Naive thymus-derived CD4-positive, alpha-beta T cell (primary cell): ENCODE measurements at regions of chr6 and their contacts with region 1.

Region 1: GRCh38 chr6:142566628-142567396 is 265.0 kb downstream of the ADGRG6 start:
- DNase-seq: peak in 8 of 9 donors; percentile 17 to 69 (median 54)
- ATAC-seq: peak; percentile 81
- H3K4me3 ChIP-seq: no peak overlapping the region
- H3K4me3 Mint-ChIP-seq: peak overlapping the region in 7 of 10 donors; percentile 8 to 78 (median 51)
- H3K27ac ChIP-seq: no peak overlapping the region
- H3K27ac Mint-ChIP-seq: peak overlapping the region in 8 of 9 donors; percentile 51 to 92 (median 76)
- H3K4me1 ChIP-seq: peaks cover 0 to 60% of the 10 kb centered on the region in 2 donors
- H3K4me1 Mint-ChIP-seq: peaks cover 19 to 85% (median 74%) of the 10 kb centered on the region in 7 donors
- H3K27me3 ChIP-seq: no peaks in the 10 kb centered on the region
- H3K27me3 Mint-ChIP-seq: no peaks in the 10 kb centered on the region

Region 2: GRCh38 chr6:141969201-141969600 is 597.6 kb before region 1 on chr6:
- CTCF ChIA-PET with region 1: no interaction called
- POLR2A ChIA-PET with region 1: no interaction called
- intact Hi-C with region 1: no loop called
- DNase-seq: no peak
- ATAC-seq: no peak
- H3K4me3 ChIP-seq: no peak overlapping the region
- H3K4me3 Mint-ChIP-seq: no peak overlapping the region
- H3K27ac ChIP-seq: no peak overlapping the region
- H3K27ac Mint-ChIP-seq: no peak overlapping the region
- H3K4me1 ChIP-seq: no peaks in the 10 kb centered on the region
- H3K4me1 Mint-ChIP-seq: no peaks in the 10 kb centered on the region
- H3K27me3 ChIP-seq: no peaks in the 10 kb centered on the region
- H3K27me3 Mint-ChIP-seq: peaks cover 0 to 16% (median 11%) of the 10 kb centered on the region in 5 donors

Region 3: DNA sequence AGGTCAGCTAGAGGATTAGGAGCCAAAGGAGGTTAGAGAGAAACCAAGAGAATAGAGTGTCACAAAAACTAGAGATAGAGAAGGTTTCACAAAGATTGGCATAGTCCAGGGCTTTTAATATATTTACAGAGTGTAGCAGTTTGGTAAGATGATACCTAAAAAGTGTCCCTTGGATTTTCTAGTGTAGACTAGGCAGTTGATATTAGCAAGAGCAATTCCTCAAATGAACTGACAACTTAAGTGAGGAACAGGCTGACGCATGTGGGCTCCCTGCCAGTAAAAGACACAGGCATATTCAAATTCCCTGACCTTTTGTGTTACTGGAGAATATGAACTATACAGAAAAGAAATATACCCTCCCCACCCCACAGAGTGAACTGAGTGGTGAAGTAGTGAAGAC is 379.6 kb before region 1 on chr6:
- CTCF ChIA-PET with region 1: no interaction called
- POLR2A ChIA-PET with region 1: no interaction called
- intact Hi-C with region 1: no loop called
- DNase-seq: no peak
- ATAC-seq: no peak
- H3K4me3 ChIP-seq: no peak overlapping the region
- H3K4me3 Mint-ChIP-seq: no peak overlapping the region
- H3K27ac ChIP-seq: no peak overlapping the region
- H3K27ac Mint-ChIP-seq: peak overlapping the region in 3 of 9 donors; percentile 11 to 28 (median 16)
- H3K4me1 ChIP-seq: no peaks in the 10 kb centered on the region
- H3K4me1 Mint-ChIP-seq: peaks cover 2 to 46% (median 22%) of the 10 kb centered on the region in 7 donors
- H3K27me3 ChIP-seq: no peaks in the 10 kb centered on the region
- H3K27me3 Mint-ChIP-seq: no peaks in the 10 kb centered on the region

Region 4: DNA sequence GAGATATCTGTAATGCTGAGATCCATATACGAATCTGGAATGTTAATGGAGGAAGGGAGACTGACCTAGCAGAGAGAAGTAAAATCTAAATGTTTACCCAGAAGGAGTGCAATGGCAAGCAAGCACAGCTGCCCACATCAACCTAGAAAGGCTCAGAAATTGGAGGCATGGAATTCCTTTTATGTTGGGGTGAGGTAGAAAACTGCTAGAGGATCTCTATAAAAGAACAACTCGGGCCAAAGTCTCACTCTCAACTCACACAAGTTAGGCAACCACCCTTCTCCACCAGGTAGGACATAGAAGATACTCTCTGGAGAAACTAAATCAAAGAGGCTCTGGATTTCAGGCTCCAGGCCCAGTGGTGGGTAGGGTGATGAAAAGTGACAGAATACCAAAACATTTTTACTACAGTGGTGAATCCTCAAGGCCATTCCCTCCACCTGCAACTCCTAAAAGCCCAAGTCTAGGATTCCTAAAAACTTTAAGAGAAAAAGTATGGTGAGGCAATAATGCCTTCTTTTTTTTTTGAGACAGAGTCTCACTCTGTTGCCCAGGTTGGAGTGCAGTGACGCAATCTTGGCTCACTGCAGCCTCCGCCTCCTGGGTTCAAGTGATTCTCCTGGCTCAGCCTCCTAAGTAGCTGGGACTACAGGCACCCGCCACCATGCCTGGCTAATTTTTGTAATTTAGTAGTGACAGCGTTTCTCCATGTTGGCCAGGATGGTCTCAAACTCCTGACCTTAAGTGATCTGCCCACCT is 274.5 kb before region 1 on chr6:
- CTCF ChIA-PET with region 1: no interaction called
- POLR2A ChIA-PET with region 1: no interaction called
- intact Hi-C with region 1: no loop called
- DNase-seq: no peak
- ATAC-seq: no peak
- H3K4me3 ChIP-seq: no peak overlapping the region
- H3K4me3 Mint-ChIP-seq: no peak overlapping the region
- H3K27ac ChIP-seq: no peak overlapping the region
- H3K27ac Mint-ChIP-seq: no peak overlapping the region
- H3K4me1 ChIP-seq: no peaks in the 10 kb centered on the region
- H3K4me1 Mint-ChIP-seq: peaks cover 0 to 7% (median 0%) of the 10 kb centered on the region in 7 donors
- H3K27me3 ChIP-seq: no peaks in the 10 kb centered on the region
- H3K27me3 Mint-ChIP-seq: peaks cover 0 to 20% (median 7%) of the 10 kb centered on the region in 5 donors

Region 5: GRCh38 chr6:142387997-142388815 is 178.6 kb before region 1 on chr6:
- CTCF ChIA-PET with region 1: no interaction called
- POLR2A ChIA-PET with region 1: no interaction called
- intact Hi-C with region 1: loop called in 1 of 2 experiments (anchors 2 kb)
- DNase-seq: peak in 7 of 9 donors; percentile 22 to 50 (median 26)
- ATAC-seq: peak; percentile 67
- H3K4me3 ChIP-seq: no peak overlapping the region
- H3K4me3 Mint-ChIP-seq: no peak overlapping the region
- H3K27ac ChIP-seq: no peak overlapping the region
- H3K27ac Mint-ChIP-seq: no peak overlapping the region
- H3K4me1 ChIP-seq: peaks cover 0 to 9% of the 10 kb centered on the region in 2 donors
- H3K4me1 Mint-ChIP-seq: peaks cover 0 to 28% (median 9%) of the 10 kb centered on the region in 7 donors
- H3K27me3 ChIP-seq: no peaks in the 10 kb centered on the region
- H3K27me3 Mint-ChIP-seq: peaks cover 0 to 49% (median 0%) of the 10 kb centered on the region in 5 donors

Region 6: DNA sequence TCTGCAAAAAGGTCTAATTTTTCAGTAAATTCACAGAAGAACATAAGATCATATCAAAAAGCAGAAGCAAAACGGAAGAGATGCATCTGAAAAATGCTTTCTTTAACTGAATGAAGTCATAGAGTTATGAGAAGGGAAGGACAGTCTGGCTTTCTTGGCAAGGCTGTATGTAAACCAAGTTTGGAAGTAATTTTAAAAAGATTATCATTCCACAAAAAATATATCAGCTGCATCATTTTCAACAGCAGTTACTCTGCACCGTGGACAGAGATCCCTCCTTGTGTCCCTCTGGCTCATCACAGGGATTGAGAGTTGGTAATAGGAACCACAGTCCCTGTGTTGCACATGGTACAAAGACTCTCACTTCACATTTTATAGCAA is 119.7 kb after region 1 on chr6:
- CTCF ChIA-PET with region 1: no interaction called
- POLR2A ChIA-PET with region 1: no interaction called
- intact Hi-C with region 1: loop called (anchors 2 to 5 kb)
- DNase-seq: no peak
- ATAC-seq: peak; percentile 12
- H3K4me3 ChIP-seq: no peak overlapping the region
- H3K4me3 Mint-ChIP-seq: peak overlapping the region in 9 of 10 donors; percentile 18 to 76 (median 68)
- H3K27ac ChIP-seq: peak overlapping the region; percentile 22
- H3K27ac Mint-ChIP-seq: peak overlapping the region in 8 of 9 donors; percentile 61 to 90 (median 80)
- H3K4me1 ChIP-seq: peaks cover 0 to 21% of the 10 kb centered on the region in 2 donors
- H3K4me1 Mint-ChIP-seq: peaks cover 0 to 53% (median 41%) of the 10 kb centered on the region in 7 donors
- H3K27me3 ChIP-seq: no peaks in the 10 kb centered on the region
- H3K27me3 Mint-ChIP-seq: no peaks in the 10 kb centered on the region

Region 7: DNA sequence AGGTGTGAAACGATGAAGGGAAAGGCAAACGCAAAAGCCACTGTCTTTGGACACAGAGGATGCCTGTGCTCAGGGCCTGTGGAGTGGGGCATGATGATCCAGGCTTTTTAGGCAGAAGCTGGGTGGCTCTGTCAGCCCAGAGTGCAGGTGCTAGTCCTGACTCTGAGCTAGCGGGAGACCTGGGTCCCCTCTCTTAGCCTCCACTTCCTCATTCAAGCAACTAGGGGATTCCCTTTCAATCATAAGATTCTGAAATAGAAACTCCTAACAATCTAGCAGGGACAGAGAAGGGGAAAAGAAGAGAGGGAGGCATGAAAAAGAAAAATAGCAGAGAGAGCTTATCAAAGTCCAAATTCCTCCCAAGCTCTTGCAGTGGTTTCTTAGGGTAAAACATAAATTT is 385.8 kb after region 1 on chr6:
- CTCF ChIA-PET with region 1: no interaction called
- POLR2A ChIA-PET with region 1: no interaction called
- intact Hi-C with region 1: loop called (anchors 2 to 10 kb)
- DNase-seq: no peak
- ATAC-seq: peak; percentile 26
- H3K4me3 ChIP-seq: no peak overlapping the region
- H3K4me3 Mint-ChIP-seq: no peak overlapping the region
- H3K27ac ChIP-seq: peak overlapping the region; percentile 23
- H3K27ac Mint-ChIP-seq: peak overlapping the region in 8 of 9 donors; percentile 17 to 94 (median 76)
- H3K4me1 ChIP-seq: no peaks in the 10 kb centered on the region
- H3K4me1 Mint-ChIP-seq: peaks cover 15 to 46% (median 29%) of the 10 kb centered on the region in 7 donors
- H3K27me3 ChIP-seq: no peaks in the 10 kb centered on the region
- H3K27me3 Mint-ChIP-seq: peaks cover 0 to 4% (median 0%) of the 10 kb centered on the region in 5 donors

Region 8: DNA sequence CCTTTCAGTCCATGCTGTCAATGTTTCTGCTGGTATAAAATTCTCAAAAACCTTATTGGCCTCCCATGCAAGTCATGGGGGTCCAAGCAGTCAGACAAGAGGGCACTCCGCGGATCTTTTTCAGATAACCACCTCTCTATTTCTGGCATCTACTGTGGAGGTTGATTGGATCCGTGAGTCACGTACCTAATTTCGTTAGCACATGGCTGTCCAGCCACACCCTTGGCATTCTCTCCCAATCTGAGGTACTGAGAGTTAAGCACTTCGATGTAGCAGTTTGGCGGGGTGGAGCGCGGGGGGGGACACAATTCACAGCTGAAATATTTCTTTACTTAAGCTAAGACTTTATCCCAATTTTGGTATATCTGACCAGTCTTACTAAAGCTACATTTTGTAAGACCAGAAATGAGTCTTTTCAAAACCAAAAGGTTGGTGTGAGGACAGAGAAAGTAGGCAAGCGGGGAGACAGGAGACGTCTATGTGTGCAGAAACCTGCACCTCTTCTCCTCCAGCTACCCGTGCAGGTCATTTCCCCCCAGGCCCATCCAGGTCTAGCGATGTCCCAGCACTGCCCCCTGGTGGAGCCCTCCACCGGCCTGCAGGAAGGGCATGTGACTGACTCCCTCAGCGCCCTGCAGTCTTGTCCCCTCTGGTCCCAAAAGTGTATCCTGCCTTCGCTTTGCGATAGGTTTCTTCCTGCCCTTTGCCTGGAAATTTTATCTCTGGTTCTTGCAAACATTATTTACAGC is 770.6 kb after region 1 on chr6:
- CTCF ChIA-PET with region 1: no interaction called
- POLR2A ChIA-PET with region 1: no interaction called
- intact Hi-C with region 1: loop called in 1 of 2 experiments (anchors 5 kb)
- DNase-seq: peak; percentile 4 to 56 (median 12)
- ATAC-seq: no peak
- H3K4me3 ChIP-seq: no peak overlapping the region
- H3K4me3 Mint-ChIP-seq: no peak overlapping the region
- H3K27ac ChIP-seq: no peak overlapping the region
- H3K27ac Mint-ChIP-seq: no peak overlapping the region
- H3K4me1 ChIP-seq: no peaks in the 10 kb centered on the region
- H3K4me1 Mint-ChIP-seq: peaks cover 0 to 2% (median 0%) of the 10 kb centered on the region in 7 donors
- H3K27me3 ChIP-seq: no peaks in the 10 kb centered on the region
- H3K27me3 Mint-ChIP-seq: no peaks in the 10 kb centered on the region

Region 9: GRCh38 chr6:144013486-144013909 is 1446.7 kb after region 1 on chr6:
- CTCF ChIA-PET with region 1: no interaction called
- POLR2A ChIA-PET with region 1: no interaction called
- intact Hi-C with region 1: loop called in 1 of 2 experiments (anchors 10 kb)
- DNase-seq: peak; percentile 18 to 58 (median 45)
- ATAC-seq: peak; percentile 54
- H3K4me3 ChIP-seq: no peak overlapping the region
- H3K4me3 Mint-ChIP-seq: no peak overlapping the region
- H3K27ac ChIP-seq: no peak overlapping the region
- H3K27ac Mint-ChIP-seq: peak overlapping the region in 1 of 9 donors; percentile 9
- H3K4me1 ChIP-seq: no peaks in the 10 kb centered on the region
- H3K4me1 Mint-ChIP-seq: peaks cover 0 to 4% (median 0%) of the 10 kb centered on the region in 7 donors
- H3K27me3 ChIP-seq: peaks cover 0 to 6% of the 10 kb centered on the region in 2 donors
- H3K27me3 Mint-ChIP-seq: peaks cover 11 to 45% (median 28%) of the 10 kb centered on the region in 5 donors